ENCODE measurements at regions of chr18 and their contacts with region 1.

Region 1: DNA sequence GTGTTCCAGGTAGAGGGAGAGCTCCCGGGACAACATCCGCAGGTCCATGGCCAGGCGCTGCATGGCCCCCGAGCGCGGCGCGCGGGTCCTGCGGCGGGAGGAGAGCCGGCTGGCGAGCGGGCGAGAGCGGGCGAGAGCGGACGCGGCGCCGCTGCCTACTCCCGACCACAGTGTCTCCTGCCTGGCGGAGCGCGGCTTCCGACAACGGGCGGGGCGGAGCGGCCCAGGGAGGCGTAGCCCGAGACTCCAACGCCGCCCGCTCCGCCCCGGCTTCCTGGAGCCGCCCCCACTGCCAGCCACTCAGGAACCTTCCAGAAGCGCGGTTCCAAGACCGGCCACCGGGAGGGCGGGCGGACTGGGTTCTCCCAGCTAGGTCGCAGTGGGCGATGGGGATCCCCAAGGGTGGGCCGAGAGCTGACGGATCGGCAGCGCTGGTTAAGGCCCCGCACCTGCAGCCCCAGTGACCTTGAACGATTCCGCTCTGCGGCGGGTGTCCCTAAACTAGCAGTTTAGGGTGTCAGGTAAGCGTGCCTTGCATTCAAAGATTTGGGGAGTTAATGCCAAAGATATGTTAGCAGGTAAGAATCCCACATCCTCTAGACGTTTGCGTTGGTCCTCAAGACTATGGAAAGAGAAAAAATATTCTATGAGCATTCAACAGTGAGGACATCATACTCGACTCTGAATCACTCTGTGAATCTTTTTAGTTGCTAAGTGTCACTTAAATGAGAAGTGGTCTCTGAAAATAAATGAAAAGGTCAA is at the start of gene ABHD3:
- DNase-seq: peak; percentile 90 to 92
- ATAC-seq: peak; percentile 92 to 96
- H3K4me3 ChIP-seq: peak within 1 kb of the TSS; percentile 82 to 97 (median 89)
- H3K27ac ChIP-seq: peak within 1 kb of the TSS; percentile 86 to 97 (median 96)
- H3K4me1 ChIP-seq: peaks cover 12 to 20% of the 10 kb centered on the region in 2 donors
- H3K27me3 ChIP-seq: no peaks in the 10 kb centered on the region
- CTCF ChIP-seq: peak; percentile 54 to 72 (median 62)
- POLR2A ChIP-seq: peak; percentile 94 to 99
- total RNA-seq, gene ABHD3: 3.8 to 4.5 (median 4.2) TPM

Region 2: GRCh38 chr18:21452796-21453510 is 251.8 kb before region 1 on chr18:
- in situ Hi-C with region 1: no loop called
- intact Hi-C with region 1: loop called (anchors 5 kb)
- DNase-seq: no peak
- ATAC-seq: no peak
- H3K4me3 ChIP-seq: no peak overlapping the region
- H3K27ac ChIP-seq: peak overlapping the region; percentile 90 to 96 (median 92)
- H3K4me1 ChIP-seq: peaks cover 62 to 75% of the 10 kb centered on the region in 2 donors
- H3K27me3 ChIP-seq: no peaks in the 10 kb centered on the region
- CTCF ChIP-seq: no peak
- POLR2A ChIP-seq: no peak

Region 3: DNA sequence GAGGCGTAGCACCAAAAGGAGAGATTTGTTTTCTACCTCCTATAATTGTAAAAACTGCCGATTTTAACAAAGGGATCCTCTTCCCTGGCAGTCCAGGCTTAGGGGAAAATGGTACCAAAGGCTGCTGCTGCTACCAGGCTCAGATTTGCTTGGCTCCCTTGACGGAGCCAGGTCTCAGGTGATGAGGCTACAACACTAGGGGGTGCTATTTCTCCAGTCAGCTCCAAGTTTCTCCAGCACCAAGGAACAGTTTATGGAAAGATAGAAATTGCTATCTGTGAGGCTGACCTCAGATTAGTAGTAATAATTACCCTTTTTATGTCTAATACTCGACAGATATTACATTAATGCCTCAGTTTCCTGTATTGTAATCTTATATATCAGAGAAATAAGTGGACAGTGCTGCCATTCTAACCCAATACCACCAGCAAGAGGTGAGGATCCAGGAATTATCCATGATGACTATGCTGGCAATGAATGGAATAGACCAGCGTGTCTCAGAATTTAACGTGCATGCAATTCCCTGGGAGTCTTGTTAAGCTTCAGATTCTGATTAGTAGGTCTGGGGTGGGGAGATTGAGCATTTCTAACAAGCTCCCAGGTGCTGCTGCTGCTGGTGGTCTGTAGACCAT is 215.5 kb before region 1 on chr18:
- in situ Hi-C with region 1: no loop called
- intact Hi-C with region 1: loop called (anchors 10 kb)
- DNase-seq: peak in 1 of 2 donors; percentile 58
- ATAC-seq: peak; percentile 55 to 76
- H3K4me3 ChIP-seq: no peak overlapping the region
- H3K27ac ChIP-seq: peak overlapping the region in 3 of 4 donors; percentile 42 to 83 (median 57)
- H3K4me1 ChIP-seq: peaks cover 15 to 25% of the 10 kb centered on the region in 2 donors
- H3K27me3 ChIP-seq: no peaks in the 10 kb centered on the region
- CTCF ChIP-seq: peak; percentile 50 to 76 (median 68)
- POLR2A ChIP-seq: no peak

Region 4: DNA sequence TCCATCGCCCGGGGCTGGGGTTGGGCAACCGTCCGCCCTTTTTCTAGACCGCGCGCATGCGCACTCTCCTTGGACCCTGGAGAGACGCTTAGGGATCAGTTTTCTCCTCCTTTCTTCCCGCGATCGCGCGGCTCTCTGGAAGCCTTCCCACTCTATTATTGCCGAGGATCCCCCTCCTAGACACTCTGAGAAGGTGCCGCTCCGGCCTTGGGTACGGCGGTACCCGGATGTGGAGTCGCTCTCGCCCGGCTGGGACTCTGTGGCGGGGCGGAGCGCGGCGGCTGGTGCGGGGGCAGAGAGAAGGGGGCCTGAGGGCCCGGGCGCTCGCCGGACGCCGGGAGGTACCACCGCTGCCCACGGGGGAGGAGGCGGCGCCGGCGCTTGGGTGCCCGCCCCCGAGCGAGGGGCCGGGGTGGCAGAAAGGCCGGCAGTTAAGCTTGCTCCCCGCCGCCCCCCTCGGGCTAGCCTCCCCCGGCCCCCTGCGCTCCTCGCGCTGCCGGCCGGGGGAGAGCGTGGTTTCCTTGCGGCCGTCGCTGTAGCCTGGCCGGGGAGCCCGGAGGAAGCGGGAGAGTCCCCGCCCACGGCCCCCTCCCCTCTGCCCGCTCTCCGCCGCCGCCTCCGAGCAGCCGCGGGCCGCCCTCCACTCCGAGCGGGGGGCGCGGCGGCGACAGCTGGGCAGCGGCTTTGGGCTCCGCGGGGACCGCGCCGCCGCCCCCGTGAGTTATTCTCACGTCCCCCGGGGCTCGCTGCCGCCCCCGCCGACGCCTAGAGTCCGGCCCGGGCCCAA is 36.1 kb after region 1 on chr18 and contains the start of gene MIB1:
- in situ Hi-C with region 1: no loop called
- intact Hi-C with region 1: loop called (anchors 1 kb)
- DNase-seq: no peak
- ATAC-seq: peak; percentile 91 to 94
- H3K4me3 ChIP-seq: peak within 1 kb of the TSS; percentile 65 to 97 (median 81)
- H3K27ac ChIP-seq: peak within 1 kb of the TSS; percentile 92 to 99 (median 96)
- H3K4me1 ChIP-seq: peaks cover 30 to 37% of the 10 kb centered on the region in 2 donors
- H3K27me3 ChIP-seq: no peaks in the 10 kb centered on the region
- CTCF ChIP-seq: peak in 1 of 5 experiments; percentile 2
- POLR2A ChIP-seq: peak; percentile 84 to 88
- total RNA-seq, gene MIB1: 16.4 to 22.3 (median 21.6) TPM

Region 5: GRCh38 chr18:21851327-21851972 is 146.7 kb after region 1 on chr18:
- in situ Hi-C with region 1: no loop called
- intact Hi-C with region 1: loop called (anchors 5 kb)
- DNase-seq: no peak
- ATAC-seq: peak in 1 of 2 donors; percentile 78
- H3K4me3 ChIP-seq: peak overlapping the region in 2 of 4 donors; percentile 23 to 35
- H3K27ac ChIP-seq: no peak overlapping the region
- H3K4me1 ChIP-seq: peaks cover 9 to 22% of the 10 kb centered on the region in 2 donors
- H3K27me3 ChIP-seq: no peaks in the 10 kb centered on the region
- CTCF ChIP-seq: peak in 3 of 5 experiments; percentile 25 to 67 (median 51)
- POLR2A ChIP-seq: no peak

Measured in gastrocnemius medialis (tissue), 4 donors.